Endothelial cell of umbilical vein (primary cell): ENCODE measurements at regions of chr12 and their contacts with region 1.

Region 1: GRCh38 chr12:51341259-51342007 is 5.0 kb downstream of the CELA1 start:
- DNase-seq: peak; percentile 81
- H3K4me3 ChIP-seq: peak overlapping the region in 1 of 3 experiments; percentile 13
- H3K27ac ChIP-seq: no peak overlapping the region
- H3K4me1 ChIP-seq: no peaks in the 10 kb centered on the region
- H3K27me3 ChIP-seq: no peaks in the 10 kb centered on the region
- CTCF ChIP-seq: peak; percentile 85 to 99
- POLR2A ChIP-seq: no peak

Region 2: GRCh38 chr12:50825372-50825838 is 516.0 kb before region 1 on chr12:
- CTCF ChIA-PET with region 1: interaction called, 49 read pairs
- POLR2A ChIA-PET with region 1: interaction called, 3 read pairs
- dilution Hi-C with region 1: no loop called
- intact Hi-C with region 1: loop called (anchors 1 kb)
- DNase-seq: peak; percentile 78
- H3K4me3 ChIP-seq: no peak overlapping the region
- H3K27ac ChIP-seq: no peak overlapping the region
- H3K4me1 ChIP-seq: no peaks in the 10 kb centered on the region
- H3K27me3 ChIP-seq: no peaks in the 10 kb centered on the region
- CTCF ChIP-seq: peak; percentile 24 to 25
- POLR2A ChIP-seq: no peak

Region 3: DNA sequence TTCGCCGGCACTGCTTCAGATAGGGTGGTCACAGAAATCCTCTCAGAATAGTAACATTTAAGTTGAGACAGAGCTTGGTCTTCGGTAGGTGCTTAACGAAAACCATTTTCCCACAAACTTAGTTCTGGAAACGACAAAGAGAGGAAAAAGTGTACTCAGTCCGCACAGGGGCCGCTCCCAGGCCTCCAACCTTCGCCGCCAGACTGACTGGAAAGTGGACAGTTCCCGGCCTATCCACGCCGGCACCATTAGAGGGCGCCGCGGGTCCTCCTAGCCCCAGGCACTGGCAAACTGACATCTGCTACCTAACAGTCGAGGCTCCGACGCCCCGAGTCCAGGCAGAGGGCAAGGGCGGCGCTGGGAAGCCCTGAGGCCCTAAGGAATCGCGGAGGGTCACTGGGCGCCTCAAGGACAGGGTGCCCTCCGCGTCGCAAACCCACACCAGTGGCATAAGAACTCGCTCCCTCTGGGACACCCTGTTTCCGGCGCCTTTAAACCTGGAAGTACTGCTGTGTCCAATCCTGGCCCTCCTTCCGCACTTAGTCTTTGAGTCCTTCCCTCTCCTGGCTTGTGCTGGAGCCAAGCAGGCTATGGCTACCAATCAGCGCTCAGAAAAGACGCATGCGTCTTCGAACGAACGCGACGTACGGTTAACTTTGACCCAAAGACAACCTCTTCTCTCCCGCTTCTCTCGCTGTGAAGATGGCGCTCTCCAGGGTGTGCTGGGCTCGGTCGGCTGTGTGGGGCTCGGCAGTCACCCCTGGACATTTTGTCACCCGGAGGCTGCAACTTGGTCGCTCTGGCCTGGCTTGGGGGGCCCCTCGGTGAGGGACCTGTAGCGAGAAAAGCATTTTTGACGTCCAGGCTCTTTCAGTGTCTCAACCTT is 293.5 kb before region 1 on chr12 and contains the start of gene LETMD1:
- CTCF ChIA-PET with region 1: interaction called, 13 read pairs
- POLR2A ChIA-PET with region 1: no interaction called
- dilution Hi-C with region 1: no loop called
- intact Hi-C with region 1: loop called (anchors 1 kb)
- DNase-seq: peak; percentile 99
- H3K4me3 ChIP-seq: peak within 1 kb of the TSS; percentile 75 to 92 (median 86)
- H3K27ac ChIP-seq: peak within 1 kb of the TSS; percentile 42
- H3K4me1 ChIP-seq: peaks cover 11% of the 10 kb centered on the region
- H3K27me3 ChIP-seq: no peaks in the 10 kb centered on the region
- CTCF ChIP-seq: peak; percentile 83 to 98
- POLR2A ChIP-seq: peak; percentile 94
- total RNA-seq, gene LETMD1: 33.8 and 38.9 TPM in 2 replicates

Region 4: GRCh38 chr12:51217968-51218606 is 123.3 kb before region 1 on chr12 and contains the start of gene POU6F1:
- CTCF ChIA-PET with region 1: interaction called, 27 read pairs
- POLR2A ChIA-PET with region 1: no interaction called
- dilution Hi-C with region 1: no loop called
- intact Hi-C with region 1: no loop called
- DNase-seq: peak; percentile 85
- H3K4me3 ChIP-seq: peak within 1 kb of the TSS; percentile 64 to 89 (median 69)
- H3K27ac ChIP-seq: peak within 1 kb of the TSS; percentile 70
- H3K4me1 ChIP-seq: peaks cover 16% of the 10 kb centered on the region
- H3K27me3 ChIP-seq: no peaks in the 10 kb centered on the region
- CTCF ChIP-seq: peak; percentile 20 to 68
- POLR2A ChIP-seq: peak; percentile 16
- total RNA-seq, gene POU6F1: 14.4 and 17.5 TPM in 2 replicates

Region 5: GRCh38 chr12:51254592-51254991 is 86.8 kb before region 1 on chr12:
- CTCF ChIA-PET with region 1: interaction called, 21 read pairs
- POLR2A ChIA-PET with region 1: no interaction called
- dilution Hi-C with region 1: no loop called
- intact Hi-C with region 1: no loop called
- DNase-seq: no peak
- H3K4me3 ChIP-seq: no peak overlapping the region
- H3K27ac ChIP-seq: no peak overlapping the region
- H3K4me1 ChIP-seq: no peaks in the 10 kb centered on the region
- H3K27me3 ChIP-seq: no peaks in the 10 kb centered on the region
- CTCF ChIP-seq: no peak
- POLR2A ChIP-seq: no peak

Region 6: GRCh38 chr12:51320695-51321320 is 20.6 kb before region 1 on chr12:
- CTCF ChIA-PET with region 1: interaction called, 14 read pairs
- POLR2A ChIA-PET with region 1: no interaction called
- dilution Hi-C with region 1: no loop called
- intact Hi-C with region 1: no loop called
- DNase-seq: no peak
- H3K4me3 ChIP-seq: no peak overlapping the region
- H3K27ac ChIP-seq: no peak overlapping the region
- H3K4me1 ChIP-seq: no peaks in the 10 kb centered on the region
- H3K27me3 ChIP-seq: peaks cover 0 to 2% of the 10 kb centered on the region in 2 experiments
- CTCF ChIP-seq: no peak
- POLR2A ChIP-seq: no peak

Region 7: DNA sequence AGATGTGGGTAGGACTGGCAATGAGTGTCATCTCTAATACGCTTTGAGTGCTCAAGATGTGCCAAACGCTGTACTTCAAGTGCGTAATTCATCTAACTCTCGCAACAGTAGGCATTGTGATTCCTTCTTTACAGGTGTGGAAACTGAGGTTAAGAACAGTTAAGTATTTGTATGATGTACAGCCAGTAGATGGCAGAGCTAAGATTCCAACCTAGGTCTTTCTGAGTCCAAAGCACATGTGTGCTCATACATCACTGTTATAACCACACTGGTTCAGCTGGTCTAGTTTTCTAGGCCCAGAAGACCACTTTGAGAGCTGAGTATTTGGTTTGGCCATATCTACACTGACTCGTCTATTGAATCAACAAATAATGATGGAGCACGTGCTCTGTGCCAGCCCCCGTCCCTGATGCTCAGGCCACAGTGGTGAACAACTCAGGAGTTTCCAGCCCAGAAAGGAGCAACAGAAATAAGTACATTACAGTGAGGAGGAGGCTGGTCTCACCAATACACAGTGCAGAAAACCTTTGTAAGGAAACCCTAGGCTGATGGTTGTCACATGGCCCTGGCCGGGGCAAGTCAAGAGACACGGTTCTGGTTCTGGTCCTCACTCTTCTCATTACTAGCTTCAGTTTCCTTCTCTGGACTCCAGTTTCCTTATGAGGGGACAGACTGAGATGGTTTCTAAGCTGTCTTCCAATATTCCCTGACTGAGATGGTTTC is 180.3 kb after region 1 on chr12:
- CTCF ChIA-PET with region 1: no interaction called
- POLR2A ChIA-PET with region 1: no interaction called
- dilution Hi-C with region 1: no loop called
- intact Hi-C with region 1: no loop called
- DNase-seq: peak; percentile 10
- H3K4me3 ChIP-seq: no peak overlapping the region
- H3K27ac ChIP-seq: no peak overlapping the region
- H3K4me1 ChIP-seq: no peaks in the 10 kb centered on the region
- H3K27me3 ChIP-seq: peaks cover 0 to 7% of the 10 kb centered on the region in 2 experiments
- CTCF ChIP-seq: peak in 1 of 2 donors; percentile 12
- POLR2A ChIP-seq: no peak